ENCODE measurements at regions of chr15 and their contacts with region 1.

Region 1: GRCh38 chr15:42137431-42138261 is 18.8 kb downstream of the PLA2G4F start:
- DNase-seq: peak; percentile 22
- H3K4me3 Mint-ChIP-seq: no peak overlapping the region
- H3K27ac Mint-ChIP-seq: no peak overlapping the region
- H3K4me1 Mint-ChIP-seq: peaks cover 3% of the 10 kb centered on the region
- H3K27me3 Mint-ChIP-seq: peaks cover 37% of the 10 kb centered on the region

Region 2: GRCh38 chr15:42065033-42065432 is 72.6 kb before region 1 on chr15:
- CTCF ChIA-PET with region 1: interaction called, 38 read pairs
- DNase-seq: no peak
- H3K4me3 Mint-ChIP-seq: no peak overlapping the region
- H3K27ac Mint-ChIP-seq: no peak overlapping the region
- H3K4me1 Mint-ChIP-seq: peaks cover 5% of the 10 kb centered on the region
- H3K27me3 Mint-ChIP-seq: peaks cover 48% of the 10 kb centered on the region

Region 3: DNA sequence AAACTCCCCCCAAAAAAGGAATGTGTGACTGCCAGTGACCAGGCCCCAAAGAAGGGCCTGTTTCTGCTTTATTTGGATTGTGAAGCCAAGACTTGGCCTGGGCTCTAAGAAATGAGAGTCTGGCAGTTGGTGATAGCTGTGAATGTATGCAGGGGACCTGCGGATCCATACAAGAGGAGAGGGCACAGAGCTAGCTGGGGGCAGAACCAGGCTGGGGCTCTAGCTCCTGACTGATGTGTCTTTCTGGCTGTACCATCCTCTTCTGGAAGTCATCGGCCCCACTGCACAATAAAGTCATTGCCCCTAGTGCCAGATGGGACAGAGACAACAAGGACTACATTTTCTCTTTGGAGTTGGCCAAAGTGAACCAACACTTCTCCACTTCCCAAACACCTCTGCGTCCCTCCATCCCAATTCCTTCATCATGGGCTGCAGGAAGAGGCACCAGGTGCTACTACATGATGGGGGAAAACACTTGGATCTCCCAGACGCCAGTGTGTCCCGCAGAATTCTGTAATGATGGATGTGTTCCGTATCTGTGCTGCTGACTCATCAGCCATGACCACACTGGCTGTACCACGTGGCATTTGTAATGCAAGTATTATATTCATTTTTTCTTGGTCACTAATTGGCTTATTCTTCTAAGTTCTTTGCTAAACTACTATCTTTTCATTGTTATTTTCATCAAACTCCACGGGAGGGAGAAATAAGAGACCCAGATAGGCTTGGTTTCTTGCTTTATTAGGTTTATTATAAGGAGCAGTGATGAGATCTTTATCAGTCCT is 20.5 kb after region 1 on chr15:
- CTCF ChIA-PET with region 1: no interaction called
- DNase-seq: peak; percentile 18
- H3K4me3 Mint-ChIP-seq: no peak overlapping the region
- H3K27ac Mint-ChIP-seq: no peak overlapping the region
- H3K4me1 Mint-ChIP-seq: no peaks in the 10 kb centered on the region
- H3K27me3 Mint-ChIP-seq: no peaks in the 10 kb centered on the region

Region 4: GRCh38 chr15:42385206-42385979 is 247.7 kb after region 1 on chr15:
- CTCF ChIA-PET with region 1: interaction called, 10 read pairs
- DNase-seq: peak; percentile 55
- H3K4me3 Mint-ChIP-seq: no peak overlapping the region
- H3K27ac Mint-ChIP-seq: no peak overlapping the region
- H3K4me1 Mint-ChIP-seq: no peaks in the 10 kb centered on the region
- H3K27me3 Mint-ChIP-seq: no peaks in the 10 kb centered on the region